PC-9 (cell line): ENCODE measurements at regions of chr12 and their contacts with region 1.

Region 1: DNA sequence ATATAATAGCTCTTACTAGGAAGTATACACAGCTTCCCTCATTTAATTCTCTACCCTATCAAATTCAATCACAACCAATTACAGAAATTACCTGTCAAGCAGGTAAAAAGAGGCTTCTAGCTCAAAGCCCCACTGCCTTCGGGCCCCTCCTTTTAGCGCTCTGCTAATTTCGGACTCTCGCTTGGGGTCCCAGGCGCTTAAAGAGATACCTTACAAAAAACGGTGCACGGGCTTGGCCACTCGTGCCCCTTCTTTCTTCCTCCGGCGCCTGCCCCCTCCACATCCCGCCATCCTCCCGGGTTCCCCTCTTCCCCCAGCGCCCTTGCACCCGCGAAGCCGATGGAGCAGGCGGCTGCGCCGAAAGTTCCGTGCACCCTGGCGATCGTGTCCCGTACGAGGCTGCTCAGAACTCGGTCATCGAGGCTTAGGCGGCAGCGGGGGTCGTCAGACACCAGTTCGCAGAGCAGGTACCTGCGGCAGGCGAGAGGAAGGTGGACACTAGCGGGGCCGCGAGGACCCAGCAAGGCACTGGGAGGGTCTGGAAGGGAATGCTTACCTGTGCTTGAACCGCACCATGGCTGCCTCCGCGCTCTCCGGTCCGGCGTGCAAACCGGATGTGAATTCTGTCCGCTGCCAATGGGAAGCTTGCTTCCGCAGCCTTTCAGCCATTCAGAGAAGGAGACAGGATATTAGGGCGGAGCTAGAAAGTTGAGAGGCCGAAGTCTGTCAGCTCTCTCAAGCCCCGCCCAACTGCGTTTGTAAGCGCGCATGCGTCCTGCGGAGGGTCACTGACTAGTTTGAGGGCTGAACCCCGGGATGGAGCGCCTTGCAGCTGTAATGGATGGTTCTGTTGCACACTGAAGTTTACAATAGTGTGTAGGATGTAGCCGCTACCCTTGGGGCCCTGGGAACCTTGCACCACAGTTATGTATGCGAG is at the start of gene POP5:
- DNase-seq: peak; percentile 94 to 96
- H3K4me3 ChIP-seq: peak within 1 kb of the TSS; percentile 98
- H3K27ac ChIP-seq: no peak within 1 kb of the TSS
- H3K4me1 ChIP-seq: 0 out of 2 replicates have a peak, but pooled peaks cover 19% of the 10 kb centered on the region
- H3K27me3 ChIP-seq: no peaks in the 10 kb centered on the region
- CTCF ChIP-seq: no peak
- total RNA-seq, gene POP5: 26.5 and 30.5 TPM in 2 replicates

Region 2: GRCh38 chr12:120199595-120200306 is 381.3 kb before region 1 on chr12:
- CTCF ChIA-PET with region 1: no interaction called
- POLR2A ChIA-PET with region 1: interaction called, 20 read pairs
- intact Hi-C with region 1: no loop called
- DNase-seq: peak; percentile 23 to 63
- H3K4me3 ChIP-seq: peak overlapping the region; percentile 64
- H3K27ac ChIP-seq: peak overlapping the region; percentile 93
- H3K4me1 ChIP-seq: peaks cover 46% of the 10 kb centered on the region
- H3K27me3 ChIP-seq: no peaks in the 10 kb centered on the region
- CTCF ChIP-seq: no peak

Region 3: DNA sequence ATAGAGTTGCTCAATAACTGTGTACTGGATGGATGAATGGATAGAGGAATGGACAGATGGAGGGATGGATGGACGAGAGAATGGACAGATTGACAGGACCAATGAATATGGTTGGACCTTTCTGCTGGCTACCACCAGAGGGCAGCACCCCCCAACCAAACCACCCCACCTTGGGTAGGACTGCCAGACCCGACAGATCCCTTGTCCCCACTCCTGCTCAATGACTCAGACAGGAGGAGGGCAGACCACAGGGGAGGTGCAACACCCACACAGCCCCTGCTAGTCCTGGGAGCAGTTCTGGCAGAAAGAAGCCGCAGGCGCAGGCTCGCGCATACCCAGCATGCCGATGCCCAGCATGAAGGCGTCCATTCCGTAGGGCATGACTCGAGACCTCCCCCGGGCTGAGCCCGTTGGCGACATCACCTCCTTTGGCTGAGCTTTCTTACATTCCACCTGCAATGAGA is 224.5 kb before region 1 on chr12:
- CTCF ChIA-PET with region 1: interaction called, 5 read pairs
- POLR2A ChIA-PET with region 1: interaction called, 5 read pairs
- intact Hi-C with region 1: loop called (anchors 1 kb)
- DNase-seq: peak; percentile 92 to 94
- H3K4me3 ChIP-seq: peak overlapping the region; percentile 22; the same call in 1 of the 2 replicates
- H3K27ac ChIP-seq: no peak overlapping the region
- H3K4me1 ChIP-seq: peaks cover 5% of the 10 kb centered on the region; the same call in 1 of the 2 replicates
- H3K27me3 ChIP-seq: no peaks in the 10 kb centered on the region
- CTCF ChIP-seq: peak; percentile 89

Region 4: DNA sequence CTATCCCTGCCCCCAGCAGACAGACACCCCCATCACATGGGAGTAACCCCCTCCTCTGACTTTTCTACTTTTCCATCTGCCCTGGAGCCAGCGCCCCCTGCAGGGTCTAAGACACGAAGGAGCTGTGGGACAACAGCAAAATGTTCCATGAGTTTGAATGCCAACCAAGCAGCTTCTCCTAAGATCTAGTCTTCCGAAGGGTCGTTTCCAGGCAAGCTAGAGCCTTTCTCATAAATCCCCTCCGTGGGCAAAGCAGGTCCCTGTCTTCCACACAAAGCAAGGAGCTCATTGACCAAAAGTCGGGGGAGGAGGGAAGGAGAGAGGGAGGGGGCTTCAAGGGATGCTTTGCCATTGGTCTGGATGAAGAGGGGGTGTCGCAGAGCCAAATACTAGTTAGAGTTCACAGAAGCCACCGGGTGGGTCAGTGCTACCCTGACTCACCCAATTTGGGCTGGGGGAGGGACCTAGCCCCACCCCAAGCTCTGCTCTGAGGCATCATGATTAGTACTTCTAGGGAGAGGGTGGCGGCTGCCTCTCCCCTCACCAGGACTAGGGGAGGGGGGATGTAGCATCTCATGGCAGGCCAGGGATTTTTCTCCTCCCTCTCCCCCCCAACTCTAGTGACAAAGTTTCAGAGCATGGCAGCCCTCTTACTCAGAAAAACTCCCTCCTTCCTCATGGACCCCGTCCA is 213.7 kb before region 1 on chr12:
- CTCF ChIA-PET with region 1: no interaction called
- POLR2A ChIA-PET with region 1: no interaction called
- intact Hi-C with region 1: no loop called
- DNase-seq: no peak
- H3K4me3 ChIP-seq: no peak overlapping the region
- H3K27ac ChIP-seq: no peak overlapping the region
- H3K4me1 ChIP-seq: no peaks in the 10 kb centered on the region
- H3K27me3 ChIP-seq: peaks cover 36% of the 10 kb centered on the region
- CTCF ChIP-seq: no peak; the same call in 1 of the 2 replicates

Region 5: GRCh38 chr12:120649442-120650232 is 68.6 kb after region 1 on chr12:
- CTCF ChIA-PET with region 1: interaction called, 6 read pairs
- POLR2A ChIA-PET with region 1: interaction called, 5 read pairs
- intact Hi-C with region 1: loop called (anchors 1 kb)
- DNase-seq: no peak
- H3K4me3 ChIP-seq: peak overlapping the region; percentile 53; the same call in 1 of the 2 replicates
- H3K27ac ChIP-seq: no peak overlapping the region
- H3K4me1 ChIP-seq: peaks cover 5% of the 10 kb centered on the region; the same call in 1 of the 2 replicates
- H3K27me3 ChIP-seq: peaks cover 4% of the 10 kb centered on the region
- CTCF ChIP-seq: peak; percentile 49; the same call in 1 of the 2 replicates

Region 6: DNA sequence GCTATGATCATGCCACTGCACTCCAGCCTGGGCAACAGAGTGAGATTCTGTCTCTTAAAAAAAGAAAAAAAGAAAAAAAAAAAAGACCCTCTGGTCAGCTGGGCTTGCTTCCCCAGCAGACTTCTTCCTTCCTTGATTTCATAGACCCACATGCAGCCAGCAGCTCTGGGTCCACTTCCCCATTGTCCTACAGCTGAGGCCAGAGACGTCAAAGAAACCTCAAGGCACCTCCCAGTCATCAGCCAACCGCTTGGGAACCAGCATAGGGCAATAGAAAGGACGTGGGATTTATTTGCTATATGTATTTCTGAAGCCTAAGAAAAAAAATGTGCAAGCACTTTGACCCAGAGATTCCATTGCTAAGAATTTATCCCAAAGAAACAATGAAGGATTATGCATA is 358.5 kb after region 1 on chr12:
- CTCF ChIA-PET with region 1: no interaction called
- POLR2A ChIA-PET with region 1: no interaction called
- intact Hi-C with region 1: no loop called
- DNase-seq: no peak
- H3K4me3 ChIP-seq: no peak overlapping the region
- H3K27ac ChIP-seq: no peak overlapping the region
- H3K4me1 ChIP-seq: no peaks in the 10 kb centered on the region
- H3K27me3 ChIP-seq: no peaks in the 10 kb centered on the region
- CTCF ChIP-seq: no peak

Region 7: GRCh38 chr12:120971299-120972179 is 390.5 kb after region 1 on chr12:
- CTCF ChIA-PET with region 1: interaction called, 3 read pairs
- POLR2A ChIA-PET with region 1: interaction called, 3 read pairs
- intact Hi-C with region 1: loop called (anchors 5 kb)
- DNase-seq: peak; percentile 27 to 58
- H3K4me3 ChIP-seq: no peak overlapping the region
- H3K27ac ChIP-seq: no peak overlapping the region
- H3K4me1 ChIP-seq: no peaks in the 10 kb centered on the region
- H3K27me3 ChIP-seq: no peaks in the 10 kb centered on the region
- CTCF ChIP-seq: peak; percentile 77

Region 8: DNA sequence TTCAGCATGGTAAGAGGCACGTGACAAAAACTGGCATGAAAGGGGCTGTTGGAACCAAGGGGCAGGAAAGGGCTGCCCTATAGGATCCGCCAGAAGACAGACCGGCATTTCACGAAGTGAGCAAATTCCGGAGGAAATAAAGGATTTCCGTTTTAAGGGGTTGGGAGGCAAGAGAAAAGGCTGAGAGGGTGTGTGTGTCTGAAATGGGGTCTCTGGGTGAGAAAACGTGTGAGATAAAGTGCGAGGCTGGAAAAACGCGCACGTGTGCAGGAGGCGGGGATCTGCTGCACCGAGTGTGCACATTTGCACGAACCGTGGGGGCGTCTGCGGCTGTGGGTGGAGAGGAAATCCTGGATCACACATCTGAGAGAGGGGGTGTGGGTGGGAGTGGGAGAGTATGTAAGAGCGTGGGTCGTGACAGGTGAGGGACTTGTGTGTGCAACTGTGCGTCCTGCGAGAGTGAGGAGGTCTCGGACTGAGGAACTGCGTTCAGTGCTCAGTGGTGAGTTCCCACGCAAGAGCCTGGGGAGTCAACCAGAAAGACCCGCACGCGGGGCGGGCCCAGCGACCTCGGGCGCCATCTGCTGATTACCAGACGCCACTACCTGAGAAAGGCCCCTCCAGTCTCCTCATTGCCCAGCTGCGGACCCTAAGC is 514.6 kb after region 1 on chr12:
- CTCF ChIA-PET with region 1: no interaction called
- POLR2A ChIA-PET with region 1: no interaction called
- intact Hi-C with region 1: loop called (anchors 5 kb)
- DNase-seq: peak in 1 of 2 experiments; percentile 60
- H3K4me3 ChIP-seq: peak overlapping the region; percentile 50
- H3K27ac ChIP-seq: no peak overlapping the region
- H3K4me1 ChIP-seq: no peaks in the 10 kb centered on the region
- H3K27me3 ChIP-seq: peaks cover 14% of the 10 kb centered on the region; the same call in 1 of the 2 replicates
- CTCF ChIP-seq: peak; percentile 73

Region 9: GRCh38 chr12:121443193-121443870 is 862.3 kb after region 1 on chr12:
- CTCF ChIA-PET with region 1: no interaction called
- POLR2A ChIA-PET with region 1: no interaction called
- intact Hi-C with region 1: loop called (anchors 10 kb)
- DNase-seq: peak; percentile 42 to 79
- H3K4me3 ChIP-seq: no peak overlapping the region
- H3K27ac ChIP-seq: no peak overlapping the region
- H3K4me1 ChIP-seq: no peaks in the 10 kb centered on the region
- H3K27me3 ChIP-seq: no peaks in the 10 kb centered on the region
- CTCF ChIP-seq: peak; percentile 88